ENCODE measurements at regions of chr3 and their contacts with region 1.

Region 1: GRCh38 chr3:9302425-9303181 is 53.2 kb upstream of the SRGAP3 start:
- DNase-seq: peak; percentile 90
- ATAC-seq: peak; percentile 96

Region 2: DNA sequence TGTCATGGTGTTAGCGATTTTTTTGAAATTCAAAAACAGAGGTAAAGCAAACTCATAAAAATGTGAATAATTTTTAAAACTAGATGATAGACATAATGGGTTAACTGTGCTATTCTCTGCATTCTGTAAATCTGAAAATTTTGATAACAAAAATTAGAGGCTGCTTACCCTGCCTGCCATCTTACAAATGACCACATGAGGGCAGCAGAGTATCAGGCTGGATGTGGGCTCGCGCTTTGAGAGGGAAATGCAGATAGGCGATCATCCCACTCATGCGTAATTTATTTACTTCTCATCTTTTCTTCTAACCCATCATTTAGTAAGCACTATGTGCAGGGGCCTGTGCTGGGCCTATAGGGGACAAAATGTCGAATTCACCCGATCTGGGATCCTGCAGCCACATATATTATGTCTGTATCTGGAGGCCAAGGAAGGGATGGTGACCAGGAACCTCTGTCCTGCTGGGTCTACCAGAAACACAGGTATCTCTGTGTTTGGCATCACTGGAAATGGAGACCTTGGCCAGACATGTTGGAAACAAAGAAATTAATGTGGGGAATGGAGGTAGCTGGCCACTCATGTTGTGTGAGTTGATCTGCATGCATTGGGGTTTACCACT is 331.5 kb before region 1 on chr3:
- intact Hi-C with region 1: loop called (anchors 2 kb)
- DNase-seq: peak; percentile 81
- ATAC-seq: peak; percentile 83

Region 3: DNA sequence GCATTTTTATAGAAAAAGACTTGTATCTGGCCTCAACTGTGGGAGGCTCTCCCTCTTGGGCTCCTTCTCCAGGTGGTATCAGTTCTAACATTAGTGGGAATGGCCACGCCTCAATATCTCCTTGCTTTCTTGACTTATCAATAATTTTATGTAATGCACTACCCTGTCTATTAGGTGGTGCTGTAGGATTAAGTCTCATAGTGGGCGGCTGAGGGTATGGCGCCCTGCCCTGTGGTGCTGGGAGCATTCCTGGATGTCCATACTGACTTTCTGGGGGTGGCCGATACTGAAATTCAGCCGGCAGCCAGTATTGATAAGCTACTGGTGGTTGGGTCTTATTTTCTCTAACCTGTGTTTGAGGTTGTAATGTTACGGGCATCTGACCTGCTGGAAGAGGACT is 549.9 kb after region 1 on chr3:
- intact Hi-C with region 1: no loop called
- DNase-seq: no peak
- ATAC-seq: no peak